Caco-2 (cell line): ENCODE measurements at regions of chr15 and their contacts with region 1.

Region 1: GRCh38 chr15:96170979-96171739 is 159.3 kb upstream of the NR2F2 start:
- DNase-seq: peak; percentile 84 to 87
- H3K4me3 ChIP-seq: no peak overlapping the region
- H3K4me3 Mint-ChIP-seq: no peak overlapping the region
- H3K27ac Mint-ChIP-seq: no peak overlapping the region
- H3K4me1 ChIP-seq: peaks cover 46% of the 10 kb centered on the region
- H3K4me1 Mint-ChIP-seq: peaks cover 23% of the 10 kb centered on the region
- H3K27me3 ChIP-seq: no peaks in the 10 kb centered on the region
- H3K27me3 Mint-ChIP-seq: no peaks in the 10 kb centered on the region
- CTCF ChIP-seq: no peak

Region 2: DNA sequence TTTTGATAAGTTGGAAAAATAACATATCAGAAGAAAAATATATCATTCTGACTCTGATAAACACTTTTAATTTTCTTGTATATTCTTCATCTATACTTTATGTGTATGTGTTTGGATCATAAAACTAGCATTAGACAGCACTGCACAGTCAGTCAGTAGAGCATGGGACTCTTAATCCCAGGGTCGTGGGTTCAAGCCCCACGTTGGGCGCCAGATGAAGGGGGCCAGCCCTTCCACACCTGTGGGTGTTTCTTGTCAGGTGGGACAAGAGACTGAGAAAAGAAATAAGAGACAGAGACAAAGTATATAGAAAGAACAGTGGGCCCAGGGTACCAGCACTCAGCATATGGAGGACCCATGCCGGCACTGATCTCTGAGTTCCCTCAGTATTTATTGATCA is 386.7 kb before region 1 on chr15:
- CTCF ChIA-PET with region 1: no interaction called
- POLR2A ChIA-PET with region 1: no interaction called
- intact Hi-C with region 1: loop called (anchors 1 kb)
- DNase-seq: no peak
- H3K4me3 ChIP-seq: no peak overlapping the region
- H3K4me3 Mint-ChIP-seq: no peak overlapping the region
- H3K27ac Mint-ChIP-seq: peak overlapping the region; percentile 59
- H3K4me1 ChIP-seq: peaks cover 9% of the 10 kb centered on the region; the same call in 1 of the 2 replicates
- H3K4me1 Mint-ChIP-seq: peaks cover 7% of the 10 kb centered on the region
- H3K27me3 ChIP-seq: no peaks in the 10 kb centered on the region
- H3K27me3 Mint-ChIP-seq: no peaks in the 10 kb centered on the region
- CTCF ChIP-seq: no peak

Region 3: DNA sequence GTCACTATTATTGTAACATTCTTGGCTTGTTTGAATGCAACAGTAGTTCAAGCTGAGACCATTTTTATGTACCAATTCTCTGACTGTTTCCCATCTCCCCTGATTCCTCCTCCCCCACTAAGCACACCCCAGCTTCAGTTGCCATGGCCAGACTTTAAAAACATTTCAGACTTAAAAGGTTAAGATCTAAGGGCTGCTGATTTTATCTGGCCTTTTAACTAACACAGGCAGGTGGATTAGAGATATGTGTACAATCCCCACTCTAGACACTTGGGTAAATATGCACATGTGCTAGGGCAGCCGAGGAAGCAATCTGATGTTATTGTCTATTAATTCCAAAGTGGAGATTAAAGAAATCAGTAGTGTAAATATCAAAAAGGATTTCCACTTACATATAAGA is 226.9 kb before region 1 on chr15:
- CTCF ChIA-PET with region 1: no interaction called
- POLR2A ChIA-PET with region 1: interaction called, 3 read pairs
- intact Hi-C with region 1: loop called (anchors 1 kb)
- DNase-seq: peak; percentile 46 to 65
- H3K4me3 ChIP-seq: no peak overlapping the region
- H3K4me3 Mint-ChIP-seq: peak overlapping the region; percentile 9
- H3K27ac Mint-ChIP-seq: peak overlapping the region; percentile 65
- H3K4me1 ChIP-seq: peaks cover 17% of the 10 kb centered on the region
- H3K4me1 Mint-ChIP-seq: peaks cover 12% of the 10 kb centered on the region
- H3K27me3 ChIP-seq: no peaks in the 10 kb centered on the region
- H3K27me3 Mint-ChIP-seq: no peaks in the 10 kb centered on the region
- CTCF ChIP-seq: no peak

Region 4: GRCh38 chr15:96064351-96064756 is 106.8 kb before region 1 on chr15:
- CTCF ChIA-PET with region 1: no interaction called
- POLR2A ChIA-PET with region 1: no interaction called
- intact Hi-C with region 1: loop called (anchors 1 kb)
- DNase-seq: peak; percentile 83 to 87
- H3K4me3 ChIP-seq: no peak overlapping the region
- H3K4me3 Mint-ChIP-seq: peak overlapping the region; percentile 69
- H3K27ac Mint-ChIP-seq: peak overlapping the region; percentile 40
- H3K4me1 ChIP-seq: peaks cover 38% of the 10 kb centered on the region
- H3K4me1 Mint-ChIP-seq: peaks cover 18% of the 10 kb centered on the region
- H3K27me3 ChIP-seq: no peaks in the 10 kb centered on the region
- H3K27me3 Mint-ChIP-seq: no peaks in the 10 kb centered on the region
- CTCF ChIP-seq: no peak

Region 5: GRCh38 chr15:96183514-96183850 is 12.3 kb after region 1 on chr15:
- CTCF ChIA-PET with region 1: no interaction called
- POLR2A ChIA-PET with region 1: interaction called, 12 read pairs
- intact Hi-C with region 1: loop called (anchors 1 kb)
- DNase-seq: peak; percentile 34 to 45
- H3K4me3 ChIP-seq: no peak overlapping the region
- H3K4me3 Mint-ChIP-seq: peak overlapping the region; percentile 52
- H3K27ac Mint-ChIP-seq: peak overlapping the region; percentile 60
- H3K4me1 ChIP-seq: peaks cover 52% of the 10 kb centered on the region
- H3K4me1 Mint-ChIP-seq: peaks cover 57% of the 10 kb centered on the region
- H3K27me3 ChIP-seq: no peaks in the 10 kb centered on the region
- H3K27me3 Mint-ChIP-seq: no peaks in the 10 kb centered on the region
- CTCF ChIP-seq: no peak

Region 6: DNA sequence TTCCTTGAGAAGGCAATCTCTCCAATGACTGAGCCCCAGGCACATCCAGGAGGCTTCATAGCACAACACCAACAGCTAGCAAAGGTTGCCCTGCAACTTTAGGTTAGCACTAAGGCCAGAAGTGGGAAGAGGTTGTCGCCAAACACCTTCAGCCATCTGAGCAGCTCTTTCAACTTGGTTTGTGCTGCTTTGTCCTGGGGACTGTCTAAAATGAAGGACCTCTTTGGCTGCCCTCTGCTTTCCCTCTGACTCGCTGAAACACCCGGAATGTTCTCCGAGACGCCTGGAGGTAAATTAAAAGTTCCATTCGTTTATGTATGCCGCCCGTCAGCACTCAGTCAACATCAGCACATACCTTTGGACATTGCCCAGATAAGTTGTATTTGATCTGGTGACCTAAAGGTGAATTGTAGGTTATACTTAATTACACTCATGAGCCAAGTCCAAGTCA is 38.2 kb after region 1 on chr15:
- CTCF ChIA-PET with region 1: no interaction called
- POLR2A ChIA-PET with region 1: interaction called, 3 read pairs
- intact Hi-C with region 1: loop called (anchors 1 kb)
- DNase-seq: peak; percentile 85 to 92
- H3K4me3 ChIP-seq: no peak overlapping the region
- H3K4me3 Mint-ChIP-seq: peak overlapping the region; percentile 52
- H3K27ac Mint-ChIP-seq: peak overlapping the region; percentile 93
- H3K4me1 ChIP-seq: peaks cover 35% of the 10 kb centered on the region
- H3K4me1 Mint-ChIP-seq: peaks cover 24% of the 10 kb centered on the region
- H3K27me3 ChIP-seq: no peaks in the 10 kb centered on the region
- H3K27me3 Mint-ChIP-seq: no peaks in the 10 kb centered on the region
- CTCF ChIP-seq: no peak

Region 7: GRCh38 chr15:96264801-96265515 is 93.8 kb after region 1 on chr15:
- CTCF ChIA-PET with region 1: no interaction called
- POLR2A ChIA-PET with region 1: interaction called, 13 read pairs
- intact Hi-C with region 1: loop called (anchors 1 kb)
- DNase-seq: peak; percentile 84 to 91
- H3K4me3 ChIP-seq: no peak overlapping the region
- H3K4me3 Mint-ChIP-seq: peak overlapping the region; percentile 68
- H3K27ac Mint-ChIP-seq: peak overlapping the region; percentile 98
- H3K4me1 ChIP-seq: peaks cover 78% of the 10 kb centered on the region
- H3K4me1 Mint-ChIP-seq: peaks cover 50% of the 10 kb centered on the region
- H3K27me3 ChIP-seq: no peaks in the 10 kb centered on the region
- H3K27me3 Mint-ChIP-seq: no peaks in the 10 kb centered on the region
- CTCF ChIP-seq: no peak